Activated CD4-positive, alpha-beta T cell treated with anti-CD3 and anti-CD28 coated beads, Interleukin-2, amount 10 ng/mL, durations not matched to agents 7 days and 5 days (primary cell): ENCODE measurements at regions of chr22 and their contacts with region 1.

Region 1: GRCh38 chr22:40346178-40347118 is at the start of gene ADSL:
- DNase-seq: peak; percentile 87
- H3K4me3 Mint-ChIP-seq: peak within 1 kb of the TSS; percentile 98
- H3K27ac Mint-ChIP-seq: peak within 1 kb of the TSS; percentile 99
- H3K4me1 Mint-ChIP-seq: peaks cover 50% of the 10 kb centered on the region
- H3K27me3 Mint-ChIP-seq: no peaks in the 10 kb centered on the region
- total RNA-seq, gene ADSL: 124 to 130 TPM

Region 2: GRCh38 chr22:40276996-40277823 is 69.2 kb before region 1 on chr22:
- CTCF ChIA-PET with region 1: no interaction called
- POLR2A ChIA-PET with region 1: no interaction called
- DNase-seq: no peak
- H3K4me3 Mint-ChIP-seq: no peak overlapping the region
- H3K27ac Mint-ChIP-seq: peak overlapping the region; percentile 95
- H3K4me1 Mint-ChIP-seq: peaks cover 48% of the 10 kb centered on the region
- H3K27me3 Mint-ChIP-seq: no peaks in the 10 kb centered on the region

Region 3: GRCh38 chr22:40368016-40368415 is 21.6 kb after region 1 on chr22:
- CTCF ChIA-PET with region 1: interaction called, 6 read pairs
- POLR2A ChIA-PET with region 1: interaction called, 12 read pairs
- DNase-seq: no peak
- H3K4me3 Mint-ChIP-seq: no peak overlapping the region
- H3K27ac Mint-ChIP-seq: no peak overlapping the region
- H3K4me1 Mint-ChIP-seq: peaks cover 21% of the 10 kb centered on the region
- H3K27me3 Mint-ChIP-seq: no peaks in the 10 kb centered on the region